ENCODE measurements at regions of chr17 and their contacts with region 1.

Region 1: GRCh38 chr17:48593840-48594537 is 410 bp upstream of the HOXB5 start:
- DNase-seq: peak; percentile 51 to 95
- H3K4me3 ChIP-seq: no peak overlapping the region
- H3K27ac ChIP-seq: no peak overlapping the region
- H3K4me1 ChIP-seq: peaks cover 0 to 12% (median 4%) of the 10 kb centered on the region in 4 experiments; a peak in 5 of 7 replicates
- H3K27me3 ChIP-seq: peaks cover 96 to 100% (median 99%) of the 10 kb centered on the region in 4 experiments
- CTCF ChIP-seq: peak; percentile 86 to 89 (median 89)
- EP300 ChIP-seq: no peak
- POLR2A ChIP-seq: no peak
- RAD21 ChIP-seq: peak; percentile 90 to 91

Region 2: GRCh38 chr17:48335858-48336500 is 258.0 kb before region 1 on chr17:
- CTCF ChIA-PET with region 1: interaction called, 24 read pairs
- POLR2A ChIA-PET with region 1: interaction called, 3 read pairs
- DNase-seq: no peak
- H3K4me3 ChIP-seq: no peak overlapping the region
- H3K27ac ChIP-seq: no peak overlapping the region
- H3K4me1 ChIP-seq: no peaks in the 10 kb centered on the region
- H3K27me3 ChIP-seq: peaks cover 0 to 2% (median 0%) of the 10 kb centered on the region in 4 experiments; a peak in 2 of 7 replicates
- CTCF ChIP-seq: peak in 2 of 3 experiments; percentile 37 to 50; a peak in 2 of 4 replicates
- EP300 ChIP-seq: no peak
- POLR2A ChIP-seq: no peak
- RAD21 ChIP-seq: peak; percentile 49 to 67

Region 3: GRCh38 chr17:48351831-48352332 is 242.1 kb before region 1 on chr17:
- CTCF ChIA-PET with region 1: interaction called, 20 read pairs
- POLR2A ChIA-PET with region 1: no interaction called
- DNase-seq: no peak
- H3K4me3 ChIP-seq: no peak overlapping the region
- H3K27ac ChIP-seq: no peak overlapping the region
- H3K4me1 ChIP-seq: no peaks in the 10 kb centered on the region
- H3K27me3 ChIP-seq: no peaks in the 10 kb centered on the region; a peak in 1 of 7 replicates
- CTCF ChIP-seq: peak in 2 of 3 experiments; percentile 33; a peak in 2 of 4 replicates
- EP300 ChIP-seq: no peak
- POLR2A ChIP-seq: no peak
- RAD21 ChIP-seq: peak in 1 of 2 experiments; percentile 51

Region 4: GRCh38 chr17:48522031-48522653 is 71.8 kb before region 1 on chr17:
- CTCF ChIA-PET with region 1: interaction called, 10 read pairs
- POLR2A ChIA-PET with region 1: no interaction called
- DNase-seq: no peak
- H3K4me3 ChIP-seq: no peak overlapping the region
- H3K27ac ChIP-seq: no peak overlapping the region
- H3K4me1 ChIP-seq: peaks cover 5 to 14% (median 7%) of the 10 kb centered on the region in 4 experiments
- H3K27me3 ChIP-seq: peaks cover 35 to 78% (median 73%) of the 10 kb centered on the region in 4 experiments
- CTCF ChIP-seq: no peak
- EP300 ChIP-seq: no peak
- POLR2A ChIP-seq: no peak
- RAD21 ChIP-seq: no peak

Region 5: GRCh38 chr17:48547808-48548522 is 46.0 kb before region 1 on chr17:
- CTCF ChIA-PET with region 1: interaction called, 53 read pairs
- POLR2A ChIA-PET with region 1: interaction called, 3 read pairs
- DNase-seq: no peak
- H3K4me3 ChIP-seq: peak overlapping the region in 1 of 4 experiments; percentile 2; a peak in 1 of 8 replicates
- H3K27ac ChIP-seq: no peak overlapping the region
- H3K4me1 ChIP-seq: peaks cover 7 to 30% (median 11%) of the 10 kb centered on the region in 4 experiments
- H3K27me3 ChIP-seq: peaks cover 94 to 100% (median 99%) of the 10 kb centered on the region in 4 experiments
- CTCF ChIP-seq: no peak
- EP300 ChIP-seq: no peak
- POLR2A ChIP-seq: no peak
- RAD21 ChIP-seq: no peak

Region 6: DNA sequence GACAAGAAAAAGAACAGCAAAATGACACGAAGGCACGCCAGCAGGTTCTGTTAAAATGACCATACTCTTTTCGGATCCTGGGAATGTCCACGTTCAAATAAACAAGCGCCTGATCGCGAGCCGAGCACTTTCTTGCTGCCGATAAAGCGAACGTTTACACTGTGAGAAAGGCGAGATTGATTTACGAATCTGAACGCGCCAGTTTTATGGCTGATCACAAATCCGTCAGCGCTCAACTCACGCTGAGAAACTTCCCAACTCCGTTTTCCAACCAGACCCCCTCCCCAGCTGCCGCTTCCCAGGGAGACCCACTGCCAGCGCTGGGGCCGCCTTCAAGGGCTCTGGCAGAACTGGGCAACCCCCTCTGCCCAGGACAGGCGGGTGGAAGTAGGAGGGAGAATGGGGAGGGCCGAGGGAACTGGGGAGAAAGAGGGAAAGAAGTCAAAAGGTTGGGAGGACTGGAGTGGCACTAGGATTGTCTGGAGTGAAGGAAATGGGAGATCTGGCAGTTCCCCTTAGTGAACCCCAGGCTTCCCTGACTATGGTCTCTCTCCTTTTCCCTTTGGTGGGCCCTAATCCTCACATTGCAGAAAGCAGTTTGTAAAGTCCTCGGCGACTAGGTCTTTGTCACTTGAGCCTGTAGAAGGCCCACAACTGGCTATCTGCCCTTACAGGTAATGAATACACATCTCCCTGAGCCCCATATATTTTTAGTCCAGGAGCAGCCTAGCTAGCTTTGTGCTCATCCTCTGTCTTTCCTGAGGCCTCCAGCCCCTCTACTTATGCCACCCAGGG is 22.8 kb before region 1 on chr17:
- CTCF ChIA-PET with region 1: interaction called, 32 read pairs
- POLR2A ChIA-PET with region 1: no interaction called
- DNase-seq: no peak
- H3K4me3 ChIP-seq: no peak overlapping the region
- H3K27ac ChIP-seq: no peak overlapping the region
- H3K4me1 ChIP-seq: peaks cover 0 to 5% (median 3%) of the 10 kb centered on the region in 4 experiments; a peak in 4 of 7 replicates
- H3K27me3 ChIP-seq: peaks cover 99 to 100% (median 100%) of the 10 kb centered on the region in 4 experiments
- CTCF ChIP-seq: no peak
- EP300 ChIP-seq: no peak
- POLR2A ChIP-seq: no peak
- RAD21 ChIP-seq: no peak

Measured in H1 (cell line).